WTC11 (cell line): ENCODE measurements at regions of chr4 and their contacts with region 1.

Region 1: DNA sequence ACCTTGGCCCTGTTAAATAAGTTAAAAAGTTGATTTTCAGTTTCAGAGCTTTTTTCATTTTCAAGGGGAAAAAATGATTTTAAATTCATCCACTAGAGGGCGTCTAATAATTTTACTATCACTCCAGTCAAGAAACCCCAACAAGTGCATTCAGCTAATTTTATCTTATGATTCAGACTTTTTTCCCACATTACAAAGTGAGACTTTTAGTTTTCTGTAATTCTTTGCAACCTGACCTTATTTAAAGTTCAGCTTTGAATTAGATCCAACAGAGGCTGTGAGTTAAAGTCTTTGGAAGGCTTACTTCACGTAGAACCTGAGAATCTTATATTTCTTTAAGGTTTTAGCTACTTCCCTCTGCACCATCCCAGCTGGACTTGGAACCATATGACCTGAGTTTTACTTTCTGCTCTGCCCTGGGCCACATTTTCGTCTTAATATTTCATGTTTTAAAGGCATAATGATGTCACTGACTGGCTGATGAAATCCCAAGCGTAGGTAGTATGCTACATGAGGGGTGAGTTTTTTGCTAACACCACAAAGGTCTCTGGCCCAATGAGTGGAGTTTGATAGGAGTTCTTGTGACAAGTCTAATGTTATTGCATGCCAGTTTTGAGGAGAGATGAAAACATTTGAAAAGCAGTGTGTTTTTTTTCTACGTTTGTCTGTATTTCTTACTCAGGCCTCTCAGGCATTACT is 7.2 kb downstream of the GNRHR start:
- DNase-seq: no peak
- ATAC-seq: no peak
- H3K4me3 Mint-ChIP-seq: no peak overlapping the region
- H3K27ac Mint-ChIP-seq: no peak overlapping the region
- H3K4me1 Mint-ChIP-seq: no peaks in the 10 kb centered on the region
- H3K27me3 Mint-ChIP-seq: no peaks in the 10 kb centered on the region
- CTCF ChIP-seq: peak; percentile 31; the same call in 1 of the 2 replicates

Region 2: GRCh38 chr4:67714248-67714583 is 32.7 kb before region 1 on chr4:
- CTCF ChIA-PET with region 1: interaction called, 10 read pairs
- POLR2A ChIA-PET with region 1: no interaction called
- DNase-seq: no peak
- ATAC-seq: no peak
- H3K4me3 Mint-ChIP-seq: no peak overlapping the region
- H3K27ac Mint-ChIP-seq: no peak overlapping the region
- H3K4me1 Mint-ChIP-seq: peaks cover 43% of the 10 kb centered on the region
- H3K27me3 Mint-ChIP-seq: no peaks in the 10 kb centered on the region
- CTCF ChIP-seq: no peak

Region 3: DNA sequence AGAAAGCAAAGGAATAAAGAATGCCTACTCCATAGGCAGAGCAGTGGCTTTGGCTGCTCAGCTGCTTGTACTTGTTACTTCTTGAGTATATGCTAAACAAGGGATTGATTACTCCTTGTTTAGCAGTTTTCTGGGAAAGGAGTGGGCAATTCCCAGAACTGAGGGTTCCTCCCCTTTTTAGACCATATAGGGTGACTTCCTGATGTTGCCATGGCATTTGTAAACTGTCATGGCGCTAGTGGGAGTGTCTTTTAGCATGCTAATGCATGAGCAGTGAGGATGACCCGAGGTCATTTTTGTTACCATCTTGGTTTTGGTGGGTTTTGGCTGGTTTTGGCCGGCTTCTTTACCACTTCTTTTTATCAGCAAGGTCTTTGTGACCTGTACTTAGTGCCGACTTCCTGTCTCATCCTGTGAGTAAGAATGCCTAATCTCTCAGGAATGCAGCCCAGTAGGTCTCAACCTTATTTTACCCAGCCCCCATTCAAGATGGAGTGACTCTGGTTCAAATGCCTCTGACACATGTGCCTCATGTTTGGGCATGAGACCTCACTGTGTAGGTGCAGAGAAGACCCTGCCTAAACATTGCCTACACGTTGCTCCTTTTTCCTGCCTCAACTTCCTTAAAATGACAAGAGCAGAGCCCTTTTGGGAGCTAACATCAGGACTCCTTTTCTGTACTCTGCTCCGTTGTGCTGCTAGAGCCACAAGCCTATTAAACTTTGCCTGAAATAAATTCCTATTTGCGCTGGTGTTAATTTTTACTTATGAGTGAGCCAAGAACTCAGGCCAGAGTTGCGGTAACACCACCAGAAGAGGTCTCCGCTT is 25.0 kb before region 1 on chr4:
- CTCF ChIA-PET with region 1: interaction called, 15 read pairs
- POLR2A ChIA-PET with region 1: no interaction called
- DNase-seq: peak; percentile 36
- ATAC-seq: peak; percentile 64
- H3K4me3 Mint-ChIP-seq: no peak overlapping the region
- H3K27ac Mint-ChIP-seq: peak overlapping the region; percentile 88
- H3K4me1 Mint-ChIP-seq: peaks cover 26% of the 10 kb centered on the region
- H3K27me3 Mint-ChIP-seq: no peaks in the 10 kb centered on the region
- CTCF ChIP-seq: no peak

Region 4: GRCh38 chr4:67736262-67736661 is 10.7 kb before region 1 on chr4:
- CTCF ChIA-PET with region 1: interaction called, 15 read pairs
- POLR2A ChIA-PET with region 1: no interaction called
- DNase-seq: no peak
- ATAC-seq: no peak
- H3K4me3 Mint-ChIP-seq: no peak overlapping the region
- H3K27ac Mint-ChIP-seq: no peak overlapping the region
- H3K4me1 Mint-ChIP-seq: no peaks in the 10 kb centered on the region
- H3K27me3 Mint-ChIP-seq: no peaks in the 10 kb centered on the region
- CTCF ChIP-seq: no peak

Region 5: GRCh38 chr4:67762086-67762485 is 15.1 kb after region 1 on chr4:
- CTCF ChIA-PET with region 1: interaction called, 13 read pairs
- POLR2A ChIA-PET with region 1: no interaction called
- DNase-seq: no peak
- ATAC-seq: no peak
- H3K4me3 Mint-ChIP-seq: no peak overlapping the region
- H3K27ac Mint-ChIP-seq: no peak overlapping the region; the same call in 1 of the 2 replicates
- H3K4me1 Mint-ChIP-seq: peaks cover 7% of the 10 kb centered on the region
- H3K27me3 Mint-ChIP-seq: no peaks in the 10 kb centered on the region
- CTCF ChIP-seq: no peak

Region 6: GRCh38 chr4:67770422-67770821 is 23.5 kb after region 1 on chr4:
- CTCF ChIA-PET with region 1: interaction called, 12 read pairs
- POLR2A ChIA-PET with region 1: no interaction called
- DNase-seq: no peak
- ATAC-seq: peak; percentile 52
- H3K4me3 Mint-ChIP-seq: no peak overlapping the region
- H3K27ac Mint-ChIP-seq: no peak overlapping the region
- H3K4me1 Mint-ChIP-seq: peaks cover 6% of the 10 kb centered on the region
- H3K27me3 Mint-ChIP-seq: no peaks in the 10 kb centered on the region
- CTCF ChIP-seq: no peak

Region 7: GRCh38 chr4:67909905-67910584 is 163.1 kb after region 1 on chr4:
- CTCF ChIA-PET with region 1: interaction called, 11 read pairs
- POLR2A ChIA-PET with region 1: no interaction called
- DNase-seq: no peak
- ATAC-seq: no peak
- H3K4me3 Mint-ChIP-seq: no peak overlapping the region
- H3K27ac Mint-ChIP-seq: no peak overlapping the region
- H3K4me1 Mint-ChIP-seq: no peaks in the 10 kb centered on the region
- H3K27me3 Mint-ChIP-seq: no peaks in the 10 kb centered on the region
- CTCF ChIP-seq: peak; percentile 80